Aorta (tissue), 5 donors: ENCODE measurements at regions of chr1 and their contacts with region 1.

Region 1: GRCh38 chr1:51729824-51730301 is 113.0 kb downstream of the OSBPL9 start:
- DNase-seq: peak in 1 of 2 donors; percentile 82
- ATAC-seq: peak; percentile 58
- H3K4me3 ChIP-seq: peak overlapping the region; percentile 82 to 89
- H3K27ac ChIP-seq: peak overlapping the region in 1 of 2 donors; percentile 58
- H3K4me1 ChIP-seq: peaks cover 6 to 7% of the 10 kb centered on the region in 2 donors
- H3K27me3 ChIP-seq: no peaks in the 10 kb centered on the region

Region 2: DNA sequence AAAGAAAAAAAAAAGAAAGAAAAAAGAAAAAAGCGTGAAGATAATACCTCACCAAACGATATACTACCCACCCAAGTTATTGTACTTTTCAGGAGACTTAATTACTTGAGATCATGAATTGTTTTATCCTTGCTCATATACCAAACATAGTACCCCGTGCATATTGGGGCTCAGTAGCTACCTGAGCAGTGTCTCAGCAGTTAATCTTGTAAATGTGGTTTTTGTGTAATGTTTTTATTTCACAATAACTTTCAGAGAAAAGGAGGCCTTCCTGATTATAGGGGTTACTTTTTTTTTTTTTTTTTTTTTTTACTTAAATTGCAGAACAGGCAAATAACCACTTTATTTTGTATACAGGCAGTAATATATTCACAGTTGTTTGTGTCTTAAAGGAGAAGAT is 32.7 kb before region 1 on chr1:
- intact Hi-C with region 1: loop called in 1 of 2 experiments (anchors 5 kb)
- DNase-seq: no peak
- ATAC-seq: no peak
- H3K4me3 ChIP-seq: no peak overlapping the region
- H3K27ac ChIP-seq: no peak overlapping the region
- H3K4me1 ChIP-seq: peaks cover 4 to 5% of the 10 kb centered on the region in 2 donors
- H3K27me3 ChIP-seq: no peaks in the 10 kb centered on the region

Region 3: DNA sequence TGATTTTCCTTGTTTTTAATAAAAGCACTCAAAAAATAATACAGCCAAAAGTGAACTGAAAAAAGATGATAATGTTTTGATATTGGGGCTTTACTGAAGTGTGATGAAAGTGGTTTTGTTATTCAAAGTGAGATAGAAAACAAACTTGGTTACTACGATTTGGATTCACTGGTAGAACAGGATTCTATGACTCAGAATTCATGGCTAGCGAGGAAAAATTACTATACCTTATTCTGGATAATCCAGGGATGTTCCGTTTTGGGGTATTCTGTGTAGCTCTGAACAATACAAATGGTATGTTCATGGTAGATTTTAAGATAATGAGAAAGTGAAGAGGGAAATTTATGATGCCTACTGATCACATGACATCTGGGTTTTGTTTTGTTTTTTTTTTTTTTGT is 31.0 kb after region 1 on chr1:
- intact Hi-C with region 1: no loop called
- DNase-seq: no peak
- ATAC-seq: no peak
- H3K4me3 ChIP-seq: no peak overlapping the region
- H3K27ac ChIP-seq: no peak overlapping the region
- H3K4me1 ChIP-seq: peaks cover 0 to 4% of the 10 kb centered on the region in 2 donors
- H3K27me3 ChIP-seq: no peaks in the 10 kb centered on the region

Region 4: GRCh38 chr1:51960262-51960661 is 230.4 kb after region 1 on chr1:
- intact Hi-C with region 1: no loop called
- DNase-seq: no peak
- ATAC-seq: no peak
- H3K4me3 ChIP-seq: no peak overlapping the region
- H3K27ac ChIP-seq: no peak overlapping the region
- H3K4me1 ChIP-seq: no peaks in the 10 kb centered on the region
- H3K27me3 ChIP-seq: no peaks in the 10 kb centered on the region